ENCODE measurements at regions of chr6 and their contacts with region 1.

Region 1: GRCh38 chr6:26342106-26343004 is 22.6 kb upstream of the BTN3A2 start:
- DNase-seq: peak; percentile 35
- ATAC-seq: no peak
- H3K4me3 ChIP-seq: peak overlapping the region; percentile 61
- H3K27ac ChIP-seq: no peak overlapping the region
- H3K4me1 ChIP-seq: peaks cover 24% of the 10 kb centered on the region
- H3K27me3 ChIP-seq: no peaks in the 10 kb centered on the region
- CTCF ChIP-seq: no peak

Region 2: GRCh38 chr6:26411751-26412150 is 69.4 kb after region 1 on chr6:
- CTCF ChIA-PET with region 1: interaction called, 6 read pairs
- POLR2A ChIA-PET with region 1: no interaction called
- intact Hi-C with region 1: loop called (anchors 2 kb)
- DNase-seq: no peak
- ATAC-seq: peak; percentile 66
- H3K4me3 ChIP-seq: no peak overlapping the region
- H3K27ac ChIP-seq: no peak overlapping the region
- H3K4me1 ChIP-seq: no peaks in the 10 kb centered on the region
- H3K27me3 ChIP-seq: no peaks in the 10 kb centered on the region
- CTCF ChIP-seq: 0 out of 2 replicates have a peak, but pooled peaks have one; percentile 16

Region 3: DNA sequence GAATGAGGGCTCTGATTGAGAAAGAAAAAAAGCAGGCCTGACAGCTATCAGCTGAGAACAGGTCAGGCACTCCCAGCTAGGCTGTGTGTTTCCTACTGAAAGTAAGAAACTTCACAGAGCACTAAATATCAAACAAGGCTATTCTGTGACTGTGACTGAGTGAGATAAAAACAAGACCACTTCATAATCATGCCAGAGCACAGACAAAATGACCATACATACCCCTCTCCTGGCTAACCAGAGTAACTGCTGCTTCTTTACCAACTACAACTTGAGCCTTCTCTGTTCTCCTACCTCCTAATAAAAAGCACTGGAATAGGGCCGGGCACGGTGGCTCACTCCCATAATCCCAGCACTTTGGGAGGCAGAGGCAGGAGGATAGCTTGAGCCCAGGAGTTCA is 150.9 kb after region 1 on chr6:
- CTCF ChIA-PET with region 1: no interaction called
- POLR2A ChIA-PET with region 1: no interaction called
- intact Hi-C with region 1: loop called (anchors 1 kb)
- DNase-seq: peak; percentile 27
- ATAC-seq: peak; percentile 88
- H3K4me3 ChIP-seq: no peak overlapping the region
- H3K27ac ChIP-seq: no peak overlapping the region
- H3K4me1 ChIP-seq: no peaks in the 10 kb centered on the region
- H3K27me3 ChIP-seq: no peaks in the 10 kb centered on the region
- CTCF ChIP-seq: peak; percentile 38; the same call in 1 of the 2 replicates

Region 4: DNA sequence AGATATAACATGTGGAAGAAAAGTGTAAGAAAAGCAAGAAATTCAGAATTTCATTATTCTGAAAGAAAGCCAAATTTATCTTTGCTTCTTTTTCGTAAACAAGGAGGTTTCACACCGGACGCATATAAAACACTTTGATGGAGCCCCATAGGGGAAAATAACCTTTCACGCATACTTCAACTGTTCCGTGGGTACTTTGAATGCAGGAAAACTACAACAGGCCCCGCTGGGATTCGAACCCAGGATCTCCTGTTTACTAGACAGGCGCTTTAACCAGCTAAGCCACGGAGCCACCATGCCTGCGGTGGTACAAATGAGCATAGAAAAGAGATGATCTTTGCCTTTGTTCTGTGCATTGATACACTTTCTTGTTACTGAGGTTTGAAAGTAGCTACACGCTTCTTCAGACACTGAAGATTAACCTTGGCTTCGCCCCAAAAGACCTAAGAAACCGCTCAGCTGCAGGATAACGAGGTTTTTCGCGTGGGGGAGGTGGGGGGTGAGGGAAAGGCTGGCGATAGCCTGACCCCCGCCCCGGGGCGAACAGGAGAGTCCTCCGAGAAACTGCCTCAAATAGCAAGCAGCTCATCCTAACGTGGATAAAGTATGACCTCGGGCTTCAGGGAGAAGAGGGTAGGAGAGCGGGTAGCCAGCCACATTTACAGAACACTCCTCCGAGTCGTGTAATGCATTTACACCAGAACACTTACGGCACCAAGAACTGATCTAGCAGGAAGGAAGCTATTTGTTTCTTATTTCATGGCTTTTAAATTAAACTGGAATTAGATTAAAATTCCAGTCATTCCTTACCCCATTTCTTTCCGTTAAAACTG is 190.6 kb after region 1 on chr6:
- CTCF ChIA-PET with region 1: interaction called, 6 read pairs
- POLR2A ChIA-PET with region 1: interaction called, 26 read pairs
- intact Hi-C with region 1: loop called (anchors 1 kb)
- DNase-seq: peak; percentile 98
- ATAC-seq: peak; percentile 42
- H3K4me3 ChIP-seq: peak overlapping the region; percentile 84
- H3K27ac ChIP-seq: no peak overlapping the region
- H3K4me1 ChIP-seq: peaks cover 8% of the 10 kb centered on the region
- H3K27me3 ChIP-seq: no peaks in the 10 kb centered on the region
- CTCF ChIP-seq: no peak

Region 5: GRCh38 chr6:26596579-26597388 is 254.4 kb after region 1 on chr6 and contains the start of gene ABT1:
- CTCF ChIA-PET with region 1: interaction called, 8 read pairs
- POLR2A ChIA-PET with region 1: no interaction called
- intact Hi-C with region 1: loop called (anchors 2 kb)
- DNase-seq: peak; percentile 98
- ATAC-seq: peak; percentile 91
- H3K4me3 ChIP-seq: peak within 1 kb of the TSS; percentile 99
- H3K27ac ChIP-seq: peak within 1 kb of the TSS; percentile 69
- H3K4me1 ChIP-seq: peaks cover 10% of the 10 kb centered on the region; the same call in 1 of the 2 replicates
- H3K27me3 ChIP-seq: no peaks in the 10 kb centered on the region
- CTCF ChIP-seq: no peak
- total RNA-seq, gene ABT1: 26.9 and 33.7 TPM in 2 replicates